ENCODE measurements at regions of chr12 and their contacts with region 1.

Region 1: GRCh38 chr12:106357549-106358395 is at the start of gene POLR3B:
- DNase-seq: peak; percentile 93 to 99 (median 97)
- H3K4me3 ChIP-seq: peak within 1 kb of the TSS in 3 of 4 donors; percentile 64 to 80 (median 70)
- H3K27ac ChIP-seq: peak within 1 kb of the TSS; percentile 57 to 96 (median 93)
- H3K4me1 ChIP-seq: peaks cover 16 to 23% of the 10 kb centered on the region in 2 donors
- H3K27me3 ChIP-seq: no peaks in the 10 kb centered on the region
- CTCF ChIP-seq: peak; percentile 80 to 92 (median 88)
- POLR2A ChIP-seq: peak; percentile 70 to 93
- total RNA-seq, gene POLR3B: 9.8 to 22.4 (median 14.1) TPM

Region 2: DNA sequence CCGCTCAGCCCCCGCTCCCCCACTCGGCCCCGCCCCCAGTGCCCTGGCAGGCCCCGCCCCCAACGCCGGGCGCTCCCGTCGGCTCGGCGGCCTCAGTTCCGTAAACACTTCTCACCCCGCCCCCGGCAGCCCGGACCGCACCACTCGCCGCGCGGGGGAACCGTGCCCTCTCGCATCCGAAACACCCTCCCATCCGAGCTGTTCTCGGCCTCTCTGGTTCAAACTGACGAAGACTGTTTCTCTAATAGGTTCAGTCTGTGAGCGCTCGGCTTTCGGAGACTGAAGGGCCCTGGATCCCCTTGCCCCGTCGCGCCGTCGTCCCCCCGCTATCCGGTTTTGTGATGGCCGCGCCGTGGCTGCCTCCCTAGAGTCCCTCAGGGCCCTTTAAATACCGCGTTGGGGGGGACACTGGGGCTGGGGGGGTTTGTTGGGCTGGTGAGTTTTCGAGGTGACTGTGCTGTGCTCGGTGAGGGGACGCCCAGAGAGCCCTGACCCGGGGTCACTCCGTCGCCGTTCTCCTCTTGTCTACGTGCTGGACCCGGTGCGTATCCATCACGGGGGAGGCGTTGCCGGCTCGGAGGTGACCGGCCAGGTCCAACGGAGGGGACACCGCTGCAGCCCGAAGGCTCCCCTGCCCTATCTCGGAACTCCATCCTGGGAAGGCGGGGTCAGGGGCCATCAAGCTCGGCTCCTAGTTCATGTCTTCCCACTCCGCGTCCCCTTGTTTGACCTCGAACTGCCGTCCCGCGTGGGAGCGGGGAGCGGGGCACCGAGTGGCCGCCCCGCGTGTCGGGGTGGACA is 55.2 kb before region 1 on chr12 and contains the start of gene TCP11L2:
- intact Hi-C with region 1: loop called in 1 of 2 experiments (anchors 10 kb)
- DNase-seq: peak; percentile 84 to 91 (median 89)
- H3K4me3 ChIP-seq: peak within 1 kb of the TSS; percentile 63 to 93 (median 88)
- H3K27ac ChIP-seq: peak within 1 kb of the TSS; percentile 77 to 94 (median 89)
- H3K4me1 ChIP-seq: peaks cover 21 to 30% of the 10 kb centered on the region in 2 donors
- H3K27me3 ChIP-seq: no peaks in the 10 kb centered on the region
- CTCF ChIP-seq: no peak
- POLR2A ChIP-seq: peak in 1 of 2 donors; percentile 57
- total RNA-seq, gene TCP11L2: 13.1 to 70.4 (median 38.9) TPM

Region 3: DNA sequence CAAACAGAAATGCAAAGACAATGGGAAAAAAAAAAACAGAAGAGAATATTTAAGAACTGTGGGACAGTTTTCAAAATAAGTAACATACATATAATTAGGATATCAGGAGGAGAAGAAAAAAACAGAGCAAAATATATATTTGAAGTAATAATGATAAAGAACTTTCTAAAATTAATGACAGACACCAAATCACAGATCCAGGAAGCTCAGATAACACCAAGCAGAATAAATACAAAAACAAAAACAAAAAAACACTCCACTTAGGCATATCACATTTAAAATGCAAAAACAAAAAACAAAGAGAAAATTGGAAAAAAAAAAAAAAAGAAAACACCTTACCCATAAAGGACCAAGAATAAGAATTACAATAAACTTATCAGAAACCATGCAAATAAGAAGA is 215.5 kb after region 1 on chr12:
- intact Hi-C with region 1: no loop called
- DNase-seq: no peak
- H3K4me3 ChIP-seq: no peak overlapping the region
- H3K27ac ChIP-seq: no peak overlapping the region
- H3K4me1 ChIP-seq: no peaks in the 10 kb centered on the region
- H3K27me3 ChIP-seq: peaks cover 14% of the 10 kb centered on the region
- CTCF ChIP-seq: no peak
- POLR2A ChIP-seq: no peak

Region 4: DNA sequence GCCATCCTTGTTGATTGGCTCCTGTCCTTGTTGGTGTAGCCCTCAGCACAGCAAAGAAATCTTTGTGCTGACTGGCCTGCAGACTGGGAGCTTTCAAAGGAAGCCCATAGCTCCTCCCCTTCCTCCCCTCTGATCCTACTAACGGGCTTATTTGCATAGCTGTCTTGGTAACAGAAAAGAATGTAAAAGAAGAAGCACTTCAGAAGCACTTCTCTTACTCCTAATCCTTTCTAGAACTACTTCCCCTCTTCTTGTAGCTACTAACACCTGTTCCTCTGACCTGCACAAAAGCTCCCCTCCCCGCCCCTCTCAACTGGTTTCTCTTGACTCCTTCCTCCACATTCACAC is 402.4 kb after region 1 on chr12:
- intact Hi-C with region 1: no loop called
- DNase-seq: no peak
- H3K4me3 ChIP-seq: no peak overlapping the region
- H3K27ac ChIP-seq: peak overlapping the region in 2 of 5 donors; percentile 24 to 45
- H3K4me1 ChIP-seq: no peaks in the 10 kb centered on the region
- H3K27me3 ChIP-seq: no peaks in the 10 kb centered on the region
- CTCF ChIP-seq: no peak
- POLR2A ChIP-seq: no peak